Mammary epithelial cell (primary cell): ENCODE measurements at regions of chr10 and their contacts with region 1.

Region 1: GRCh38 chr10:72215652-72216549 is at the starts of genes ANAPC16 and ASCC1:
- DNase-seq: peak; percentile 93
- H3K4me3 ChIP-seq: peak within 1 kb of the TSS; percentile 74 to 89 (median 87)
- H3K27ac ChIP-seq: peak within 1 kb of the TSS; percentile 91
- H3K4me1 ChIP-seq: peaks cover 13% of the 10 kb centered on the region
- H3K27me3 ChIP-seq: no peaks in the 10 kb centered on the region
- CTCF ChIP-seq: no peak
- total RNA-seq, gene ANAPC16: 66.4 to 87.2 TPM
- total RNA-seq, gene ASCC1: 40.2 to 54.5 TPM

Region 2: GRCh38 chr10:72162978-72163377 is 52.9 kb before region 1 on chr10:
- CTCF ChIA-PET with region 1: no interaction called
- dilution Hi-C with region 1: no loop called
- in situ Hi-C with region 1: no loop called
- intact Hi-C with region 1: loop called (anchors 5 kb)
- DNase-seq: peak; percentile 91
- H3K4me3 ChIP-seq: no peak overlapping the region
- H3K27ac ChIP-seq: no peak overlapping the region
- H3K4me1 ChIP-seq: no peaks in the 10 kb centered on the region
- H3K27me3 ChIP-seq: no peaks in the 10 kb centered on the region
- CTCF ChIP-seq: no peak

Region 3: DNA sequence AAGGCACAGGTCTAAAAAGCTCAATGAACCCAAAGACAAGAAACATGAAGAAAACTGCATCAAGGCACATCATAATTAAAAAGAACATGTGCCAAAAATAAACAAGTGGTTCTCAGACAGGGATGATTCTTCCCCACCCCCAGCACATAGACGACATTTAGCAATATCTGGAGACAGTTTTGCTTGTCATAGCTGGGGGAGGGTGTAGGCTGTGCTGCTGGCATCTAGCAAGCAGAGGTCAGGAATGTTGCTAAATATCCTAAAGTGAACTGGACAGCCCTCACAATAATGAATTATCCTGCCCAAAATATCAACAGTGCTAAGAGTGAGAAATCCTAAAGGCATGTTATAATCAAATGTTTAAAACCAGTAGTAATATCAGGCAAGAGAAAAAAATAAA is 287.3 kb after region 1 on chr10:
- CTCF ChIA-PET with region 1: no interaction called
- dilution Hi-C with region 1: no loop called
- in situ Hi-C with region 1: no loop called
- intact Hi-C with region 1: no loop called
- DNase-seq: no peak
- H3K4me3 ChIP-seq: no peak overlapping the region
- H3K27ac ChIP-seq: no peak overlapping the region
- H3K4me1 ChIP-seq: no peaks in the 10 kb centered on the region
- H3K27me3 ChIP-seq: no peaks in the 10 kb centered on the region
- CTCF ChIP-seq: no peak